ENCODE measurements at regions of chr19 and their contacts with region 1.

Region 1: GRCh38 chr19:40425450-40426287 is at the start of gene SERTAD1:
- DNase-seq: peak; percentile 99 to 100 (median 100)
- H3K4me3 ChIP-seq: peak within 1 kb of the TSS; percentile 74 to 91 (median 81)
- H3K27ac ChIP-seq: peak within 1 kb of the TSS; percentile 84 to 93
- H3K4me1 ChIP-seq: peaks cover 4 to 31% (median 21%) of the 10 kb centered on the region in 4 experiments
- H3K27me3 ChIP-seq: no peaks in the 10 kb centered on the region

Region 2: DNA sequence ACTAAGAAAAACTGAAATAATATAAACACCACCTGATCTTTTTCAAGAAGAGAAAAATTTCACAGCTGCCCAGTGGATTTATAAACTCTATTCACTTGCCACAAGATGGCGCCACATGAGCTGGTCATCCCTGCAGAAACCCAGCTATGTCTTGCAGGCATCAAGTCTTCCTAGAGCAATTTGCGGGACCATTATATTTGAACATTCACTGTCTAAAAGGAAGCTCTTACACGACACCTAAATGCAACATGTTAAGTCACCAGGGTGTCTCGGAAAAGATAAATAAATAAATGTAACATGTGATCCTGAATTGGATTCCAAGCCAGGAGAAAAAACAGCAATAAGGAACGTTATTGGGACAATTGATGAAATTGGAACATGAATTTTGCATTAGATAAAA is 120.3 kb before region 1 on chr19:
- CTCF ChIA-PET with region 1: interaction called, 10 read pairs
- POLR2A ChIA-PET with region 1: no interaction called
- DNase-seq: peak; percentile 89 to 95 (median 94)
- H3K4me3 ChIP-seq: no peak overlapping the region
- H3K27ac ChIP-seq: no peak overlapping the region
- H3K4me1 ChIP-seq: peaks cover 0 to 3% (median 1%) of the 10 kb centered on the region in 4 experiments
- H3K27me3 ChIP-seq: no peaks in the 10 kb centered on the region

Region 3: DNA sequence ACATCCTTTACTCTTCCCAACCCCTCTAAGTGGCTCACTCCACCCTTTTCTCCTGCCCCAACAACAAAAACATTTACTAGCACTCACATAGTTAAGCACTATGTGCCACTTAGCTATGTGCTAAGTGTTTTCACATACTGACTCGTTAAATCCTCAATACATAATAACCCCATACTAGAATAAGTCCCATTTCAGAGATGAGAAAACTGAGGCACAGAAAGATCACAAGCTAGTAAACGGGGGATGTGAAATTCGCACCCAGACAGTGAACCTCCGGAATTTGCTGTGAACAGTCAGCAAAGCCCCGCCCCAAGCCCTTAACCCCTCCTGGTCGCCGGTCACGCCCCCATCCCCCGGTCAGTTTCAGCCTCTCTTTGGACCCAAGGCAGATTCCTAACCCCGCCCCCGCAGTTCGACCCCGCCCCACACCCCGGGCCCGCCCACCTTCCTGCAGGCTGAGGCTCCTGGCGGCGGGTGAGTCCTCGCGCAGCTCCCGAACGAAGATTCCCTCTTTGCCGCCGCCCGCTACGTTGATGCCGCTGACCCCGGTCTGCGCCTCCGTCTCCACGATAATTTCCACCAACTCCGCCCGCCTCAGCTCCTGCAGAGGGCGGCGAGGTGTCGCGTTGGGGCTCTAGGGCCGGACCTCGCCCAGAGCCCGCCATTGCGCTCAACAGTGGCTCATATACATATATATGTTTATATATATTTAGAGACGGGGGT is 22.2 kb before region 1 on chr19:
- CTCF ChIA-PET with region 1: interaction called, 14 read pairs
- POLR2A ChIA-PET with region 1: interaction called, 5 read pairs
- DNase-seq: peak; percentile 87 to 94 (median 94)
- H3K4me3 ChIP-seq: peak overlapping the region; percentile 55 to 83 (median 68)
- H3K27ac ChIP-seq: peak overlapping the region in 1 of 2 experiments; percentile 66
- H3K4me1 ChIP-seq: peaks cover 0 to 22% (median 15%) of the 10 kb centered on the region in 4 experiments
- H3K27me3 ChIP-seq: no peaks in the 10 kb centered on the region

Region 4: GRCh38 chr19:40411125-40411842 is 14.4 kb before region 1 on chr19:
- CTCF ChIA-PET with region 1: interaction called, 10 read pairs
- POLR2A ChIA-PET with region 1: interaction called, 5 read pairs
- DNase-seq: no peak
- H3K4me3 ChIP-seq: peak overlapping the region in 1 of 7 experiments; percentile 14
- H3K27ac ChIP-seq: peak overlapping the region in 1 of 2 experiments; percentile 27
- H3K4me1 ChIP-seq: peaks cover 1 to 71% (median 64%) of the 10 kb centered on the region in 4 experiments
- H3K27me3 ChIP-seq: no peaks in the 10 kb centered on the region

Region 5: GRCh38 chr19:40443131-40443810 is 17.6 kb after region 1 on chr19:
- CTCF ChIA-PET with region 1: interaction called, 8 read pairs
- POLR2A ChIA-PET with region 1: interaction called, 13 read pairs
- DNase-seq: peak; percentile 99 to 100 (median 100)
- H3K4me3 ChIP-seq: peak overlapping the region; percentile 87 to 100 (median 98)
- H3K27ac ChIP-seq: peak overlapping the region; percentile 89 to 95
- H3K4me1 ChIP-seq: peaks cover 9 to 17% (median 13%) of the 10 kb centered on the region in 4 experiments
- H3K27me3 ChIP-seq: no peaks in the 10 kb centered on the region

Region 6: DNA sequence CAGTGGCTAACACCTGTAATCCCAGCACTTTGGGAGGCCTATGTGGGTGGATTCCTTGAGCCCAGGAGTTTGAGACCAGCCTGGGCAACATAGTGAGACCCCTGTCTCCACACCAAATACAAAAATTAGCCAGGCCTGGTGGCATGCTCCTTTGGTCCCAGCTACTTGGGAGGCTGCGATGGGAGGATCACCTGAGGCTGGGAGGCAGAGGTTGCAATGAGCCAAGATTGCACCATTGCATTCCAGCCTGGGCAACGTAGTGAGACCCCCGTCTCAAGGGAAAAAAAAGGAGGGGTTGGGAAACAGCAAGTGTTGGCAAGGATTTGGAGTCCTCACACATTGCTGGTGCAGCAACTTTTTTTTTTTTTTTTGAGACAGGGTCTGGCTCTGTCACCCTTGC is 60.3 kb after region 1 on chr19:
- CTCF ChIA-PET with region 1: no interaction called
- POLR2A ChIA-PET with region 1: no interaction called
- DNase-seq: no peak
- H3K4me3 ChIP-seq: no peak overlapping the region
- H3K27ac ChIP-seq: no peak overlapping the region
- H3K4me1 ChIP-seq: peaks cover 0 to 2% (median 0%) of the 10 kb centered on the region in 4 experiments
- H3K27me3 ChIP-seq: peaks cover 2 to 28% (median 6%) of the 10 kb centered on the region in 5 experiments